ENCODE measurements at regions of chr2 and their contacts with region 1.

Region 1: GRCh38 chr2:230712443-230713330 is at the start of gene CAB39:
- DNase-seq: peak; percentile 96
- ATAC-seq: peak; percentile 87
- H3K4me3 Mint-ChIP-seq: peak within 1 kb of the TSS; percentile 91
- H3K27ac Mint-ChIP-seq: peak within 1 kb of the TSS; percentile 95
- H3K4me1 Mint-ChIP-seq: peaks cover 32% of the 10 kb centered on the region
- H3K27me3 Mint-ChIP-seq: no peaks in the 10 kb centered on the region
- total RNA-seq, gene CAB39: 138 to 143 TPM

Region 2: DNA sequence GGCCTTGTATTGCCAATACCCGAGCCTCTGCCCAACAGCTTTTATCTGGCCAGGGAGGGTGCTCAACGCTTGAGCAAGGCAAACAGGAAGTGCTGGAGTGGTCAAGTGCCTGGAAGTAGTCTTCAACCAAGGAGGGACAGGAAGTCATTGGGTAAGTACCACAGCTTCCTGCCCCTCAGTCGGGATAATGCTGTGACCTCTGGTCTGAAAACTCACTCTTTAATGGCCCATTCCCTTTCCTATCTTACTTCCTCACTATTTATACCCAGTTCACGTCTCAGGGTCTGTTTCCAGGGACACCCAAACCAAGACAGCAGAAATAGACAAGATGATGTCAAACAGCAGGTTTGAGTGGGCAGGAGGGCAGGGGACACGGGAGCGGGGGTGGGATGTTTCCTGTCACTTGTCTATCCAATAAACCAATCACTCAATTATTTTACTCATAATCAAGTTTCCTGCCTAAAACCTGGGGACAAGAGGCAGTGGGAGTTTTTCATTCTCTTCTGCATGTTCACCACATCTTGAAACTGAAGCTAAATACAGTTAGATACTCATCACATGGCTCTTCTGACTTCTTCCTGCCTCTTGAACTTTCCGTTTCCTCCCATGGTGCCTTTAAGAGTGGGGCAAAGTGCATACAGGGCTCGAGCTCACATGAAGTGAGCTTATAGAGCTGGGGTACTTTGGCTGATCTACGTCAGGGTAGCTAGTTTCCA is 69.0 kb before region 1 on chr2:
- POLR2A ChIA-PET with region 1: interaction called, 13 read pairs
- DNase-seq: peak; percentile 52
- ATAC-seq: peak; percentile 97
- H3K4me3 Mint-ChIP-seq: peak overlapping the region; percentile 63
- H3K27ac Mint-ChIP-seq: peak overlapping the region; percentile 87
- H3K4me1 Mint-ChIP-seq: peaks cover 25% of the 10 kb centered on the region
- H3K27me3 Mint-ChIP-seq: no peaks in the 10 kb centered on the region

Region 3: DNA sequence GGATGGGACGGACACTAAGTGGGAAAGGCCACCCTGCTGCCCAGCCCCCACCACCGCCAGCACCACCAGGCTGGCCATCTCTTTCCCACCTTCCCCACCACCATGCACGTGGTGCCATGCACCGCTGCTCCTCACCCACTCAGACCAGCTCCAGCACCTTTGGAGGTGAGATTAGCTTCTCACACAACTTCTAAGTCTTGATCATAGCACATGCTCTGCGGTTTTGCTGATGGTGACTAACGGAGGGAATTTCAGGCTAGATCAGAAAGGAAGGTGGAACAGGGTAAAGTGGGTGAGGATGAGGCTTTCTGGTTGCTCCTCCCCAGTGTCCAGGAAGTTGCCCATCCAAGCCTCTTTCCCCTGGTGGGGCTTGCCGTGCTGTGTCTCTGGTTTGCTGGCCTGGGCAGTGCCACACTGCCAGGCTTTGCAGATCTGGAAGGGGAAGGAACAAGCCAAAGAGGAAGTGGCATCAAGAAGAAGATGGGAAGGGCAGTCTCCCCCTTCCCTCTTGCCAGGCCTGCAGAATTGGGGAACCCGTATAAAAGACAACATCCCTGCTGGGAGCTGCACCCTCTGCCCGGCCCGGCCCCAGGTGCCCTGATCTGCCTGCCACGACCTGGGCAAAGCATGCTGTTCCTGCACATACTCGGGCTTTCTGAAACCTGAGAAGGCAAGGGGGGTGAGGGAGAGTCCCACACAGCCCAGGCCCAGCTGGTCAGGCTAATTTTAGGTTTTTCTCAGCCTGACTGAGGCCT is 44.3 kb before region 1 on chr2:
- POLR2A ChIA-PET with region 1: interaction called, 17 read pairs
- DNase-seq: peak; percentile 41
- ATAC-seq: peak; percentile 23
- H3K4me3 Mint-ChIP-seq: peak overlapping the region; percentile 54
- H3K27ac Mint-ChIP-seq: peak overlapping the region; percentile 79
- H3K4me1 Mint-ChIP-seq: peaks cover 65% of the 10 kb centered on the region
- H3K27me3 Mint-ChIP-seq: no peaks in the 10 kb centered on the region

Region 4: GRCh38 chr2:230737791-230738226 is 25.1 kb after region 1 on chr2:
- POLR2A ChIA-PET with region 1: interaction called, 12 read pairs
- DNase-seq: no peak
- ATAC-seq: no peak
- H3K4me3 Mint-ChIP-seq: peak overlapping the region; percentile 14
- H3K27ac Mint-ChIP-seq: peak overlapping the region; percentile 35
- H3K4me1 Mint-ChIP-seq: peaks cover 59% of the 10 kb centered on the region
- H3K27me3 Mint-ChIP-seq: no peaks in the 10 kb centered on the region

Region 5: GRCh38 chr2:230798769-230799399 is 86.2 kb after region 1 on chr2:
- POLR2A ChIA-PET with region 1: interaction called, 26 read pairs
- DNase-seq: no peak
- ATAC-seq: no peak
- H3K4me3 Mint-ChIP-seq: peak overlapping the region; percentile 21
- H3K27ac Mint-ChIP-seq: peak overlapping the region; percentile 57
- H3K4me1 Mint-ChIP-seq: peaks cover 24% of the 10 kb centered on the region
- H3K27me3 Mint-ChIP-seq: no peaks in the 10 kb centered on the region

Measured in activated naive CD8-positive, alpha-beta T cell treated with anti-CD3 and anti-CD28 coated beads, Interleukin-2, amount 10 ng/mL, durations not matched to agents 7 days and 5 days (primary cell).